H1 (cell line): ENCODE measurements at regions of chr11 and their contacts with region 1.

Region 1: GRCh38 chr11:86938900-86939880 is 16.0 kb downstream of the FZD4 start:
- DNase-seq: no peak
- H3K4me3 ChIP-seq: no peak overlapping the region
- H3K27ac ChIP-seq: no peak overlapping the region
- H3K4me1 ChIP-seq: peaks cover 2 to 10% (median 5%) of the 10 kb centered on the region in 4 experiments; a peak in 4 of 7 replicates
- H3K27me3 ChIP-seq: no peaks in the 10 kb centered on the region
- CTCF ChIP-seq: peak in 2 of 3 experiments; percentile 42 to 55; a peak in 2 of 4 replicates
- EP300 ChIP-seq: no peak
- POLR2A ChIP-seq: no peak
- RAD21 ChIP-seq: peak; percentile 72 to 77

Region 2: DNA sequence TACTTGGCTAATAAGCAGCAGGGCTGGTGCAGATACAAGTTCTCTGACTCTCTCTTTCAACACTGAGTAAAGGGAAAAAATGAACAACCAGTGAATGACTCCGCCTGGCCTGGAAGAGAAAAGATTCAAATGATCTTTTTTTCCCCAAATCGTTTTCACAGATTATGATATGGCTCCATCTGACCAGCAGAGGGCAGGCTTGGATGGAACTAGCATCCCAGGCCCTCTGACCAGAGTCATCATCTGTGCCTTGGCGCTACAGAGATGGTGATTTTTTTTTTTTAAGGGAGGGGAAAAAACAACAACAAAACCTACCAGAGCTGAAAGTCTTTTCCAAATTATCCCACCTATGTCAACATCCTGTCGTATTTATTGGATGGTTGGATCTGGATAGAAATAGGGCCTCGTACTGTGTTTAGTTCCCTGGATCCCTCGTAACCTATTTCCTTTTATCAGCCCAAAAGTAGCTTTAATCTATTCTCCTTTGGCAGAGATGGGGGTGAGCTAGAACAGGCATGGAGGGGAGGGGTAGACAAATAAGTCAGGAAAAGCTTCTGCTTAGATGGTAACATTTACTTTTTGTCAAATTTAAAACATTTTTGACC is 69.1 kb before region 1 on chr11:
- CTCF ChIA-PET with region 1: interaction called, 20 read pairs
- POLR2A ChIA-PET with region 1: interaction called, 3 read pairs
- DNase-seq: peak; percentile 10 to 74
- H3K4me3 ChIP-seq: no peak overlapping the region
- H3K27ac ChIP-seq: no peak overlapping the region
- H3K4me1 ChIP-seq: no peaks in the 10 kb centered on the region
- H3K27me3 ChIP-seq: no peaks in the 10 kb centered on the region
- CTCF ChIP-seq: peak; percentile 62 to 87 (median 78)
- EP300 ChIP-seq: no peak
- POLR2A ChIP-seq: no peak
- RAD21 ChIP-seq: peak; percentile 86 to 90

Region 3: DNA sequence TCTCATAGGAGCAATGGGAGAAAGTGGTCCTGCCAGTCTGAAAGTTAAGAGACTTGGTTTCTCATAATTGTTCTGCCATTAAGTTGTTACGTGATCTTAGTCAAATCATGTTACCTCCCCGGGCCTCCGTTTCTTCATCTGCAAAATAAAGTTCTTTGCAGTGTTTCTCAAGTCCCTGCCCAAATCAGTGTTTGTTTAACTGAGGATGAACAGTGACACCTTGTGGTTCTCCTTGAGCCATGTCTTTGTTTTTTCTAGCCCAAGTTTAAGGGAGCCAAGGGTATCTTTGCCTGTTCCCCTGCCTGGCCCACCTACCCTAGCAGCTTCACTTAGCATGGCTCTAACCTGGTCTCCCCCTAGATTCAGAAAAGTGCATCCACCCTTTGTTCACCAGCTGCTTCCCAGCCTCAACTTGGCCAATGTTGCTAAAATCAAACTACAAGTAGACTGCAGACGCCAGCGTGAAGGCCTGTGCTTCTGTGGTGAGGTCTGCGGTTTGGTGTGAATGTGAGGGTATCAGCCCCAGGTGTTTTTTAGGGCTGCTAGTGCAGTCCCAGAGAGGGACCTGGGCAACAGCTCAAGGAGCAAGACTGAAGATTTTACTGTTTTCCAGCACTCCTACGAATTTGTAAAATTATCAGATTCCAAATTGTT is 19.5 kb before region 1 on chr11:
- CTCF ChIA-PET with region 1: interaction called, 15 read pairs
- POLR2A ChIA-PET with region 1: no interaction called
- DNase-seq: no peak
- H3K4me3 ChIP-seq: no peak overlapping the region
- H3K27ac ChIP-seq: no peak overlapping the region
- H3K4me1 ChIP-seq: peaks cover 0 to 10% (median 3%) of the 10 kb centered on the region in 4 experiments; a peak in 4 of 7 replicates
- H3K27me3 ChIP-seq: no peaks in the 10 kb centered on the region
- CTCF ChIP-seq: peak in 2 of 3 experiments; percentile 79 to 87; a peak in 3 of 4 replicates
- EP300 ChIP-seq: no peak
- POLR2A ChIP-seq: no peak
- RAD21 ChIP-seq: peak; percentile 89 to 91

Region 4: GRCh38 chr11:86926975-86927374 is 12.2 kb before region 1 on chr11:
- CTCF ChIA-PET with region 1: interaction called, 15 read pairs
- POLR2A ChIA-PET with region 1: no interaction called
- DNase-seq: no peak
- H3K4me3 ChIP-seq: no peak overlapping the region
- H3K27ac ChIP-seq: no peak overlapping the region
- H3K4me1 ChIP-seq: peaks cover 0 to 9% (median 4%) of the 10 kb centered on the region in 4 experiments; a peak in 4 of 7 replicates
- H3K27me3 ChIP-seq: no peaks in the 10 kb centered on the region
- CTCF ChIP-seq: no peak
- EP300 ChIP-seq: no peak
- POLR2A ChIP-seq: no peak
- RAD21 ChIP-seq: no peak

Region 5: GRCh38 chr11:86955361-86956120 is 16.4 kb after region 1 on chr11 and contains the start of gene FZD4:
- CTCF ChIA-PET with region 1: interaction called, 27 read pairs
- POLR2A ChIA-PET with region 1: interaction called, 4 read pairs
- DNase-seq: peak in 1 of 2 experiments; percentile 88
- H3K4me3 ChIP-seq: peak within 1 kb of the TSS; percentile 80 to 96 (median 81)
- H3K27ac ChIP-seq: no peak within 1 kb of the TSS; the same call in 1 of the 2 replicates
- H3K4me1 ChIP-seq: peaks cover 0 to 15% (median 10%) of the 10 kb centered on the region in 4 experiments; a peak in 4 of 7 replicates
- H3K27me3 ChIP-seq: peaks cover 5 to 10% (median 8%) of the 10 kb centered on the region in 4 experiments
- CTCF ChIP-seq: peak in 2 of 3 experiments; percentile 10 to 22; a peak in 3 of 4 replicates
- EP300 ChIP-seq: no peak
- POLR2A ChIP-seq: peak; percentile 59 to 61; a peak in 2 of 3 replicates
- RAD21 ChIP-seq: peak; percentile 45 to 52; a peak in 3 of 4 replicates
- total RNA-seq, gene FZD4: 6.8 and 7.1 TPM in 2 replicates

Region 6: GRCh38 chr11:87290304-87290922 is 351.2 kb after region 1 on chr11:
- CTCF ChIA-PET with region 1: interaction called, 19 read pairs
- POLR2A ChIA-PET with region 1: no interaction called
- DNase-seq: no peak
- H3K4me3 ChIP-seq: no peak overlapping the region
- H3K27ac ChIP-seq: no peak overlapping the region
- H3K4me1 ChIP-seq: peaks cover 0 to 9% (median 4%) of the 10 kb centered on the region in 4 experiments; a peak in 3 of 7 replicates
- H3K27me3 ChIP-seq: no peaks in the 10 kb centered on the region
- CTCF ChIP-seq: peak in 2 of 3 experiments; percentile 29 to 44; a peak in 2 of 4 replicates
- EP300 ChIP-seq: no peak
- POLR2A ChIP-seq: no peak
- RAD21 ChIP-seq: peak; percentile 67 to 80

Region 7: GRCh38 chr11:87352759-87353707 is 413.8 kb after region 1 on chr11:
- CTCF ChIA-PET with region 1: interaction called, 11 read pairs
- POLR2A ChIA-PET with region 1: no interaction called
- DNase-seq: peak; percentile 61 to 99
- H3K4me3 ChIP-seq: no peak overlapping the region
- H3K27ac ChIP-seq: no peak overlapping the region
- H3K4me1 ChIP-seq: no peaks in the 10 kb centered on the region
- H3K27me3 ChIP-seq: no peaks in the 10 kb centered on the region
- CTCF ChIP-seq: peak; percentile 86 to 98 (median 95)
- EP300 ChIP-seq: no peak
- POLR2A ChIP-seq: no peak
- RAD21 ChIP-seq: peak; percentile 99